ENCODE measurements at regions of chr22 and their contacts with region 1.

Region 1: GRCh38 chr22:33920927-33921524 is 750 bp upstream of the LARGE1 start:
- DNase-seq: peak; percentile 99
- H3K4me3 ChIP-seq: peak overlapping the region; percentile 55 to 89 (median 80)
- H3K27ac ChIP-seq: peak overlapping the region; percentile 87 to 94 (median 90)
- H3K4me1 ChIP-seq: peaks cover 0 to 45% (median 20%) of the 10 kb centered on the region in 4 donors
- H3K27me3 ChIP-seq: peaks cover 12% of the 10 kb centered on the region
- CTCF ChIP-seq: no peak
- EP300 ChIP-seq: no peak
- POLR2A ChIP-seq: peak; percentile 25

Region 2: DNA sequence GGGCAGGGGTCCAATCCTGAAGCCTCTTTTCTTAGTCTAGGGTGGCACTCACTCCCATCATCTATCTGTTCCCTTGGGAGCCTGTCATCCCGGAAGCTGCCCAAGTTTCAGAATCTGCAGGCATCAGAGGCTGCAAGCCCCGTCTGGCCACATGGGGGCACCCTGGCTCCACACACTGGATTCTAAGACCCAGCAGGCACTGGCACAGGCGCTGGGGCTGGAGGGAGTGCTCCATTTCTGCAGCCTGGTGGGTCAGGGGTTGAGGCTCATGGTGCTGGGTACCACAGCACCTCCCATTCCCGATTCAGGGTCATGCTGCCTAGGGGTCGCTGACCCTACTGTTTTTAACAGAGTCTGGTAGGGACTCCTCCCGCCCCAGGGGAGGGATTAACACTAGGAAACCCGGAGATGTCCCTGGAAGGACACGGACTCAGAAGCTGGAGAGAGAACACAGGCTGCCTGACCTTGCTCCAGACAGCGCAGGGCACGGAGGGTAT is 618.9 kb before region 1 on chr22:
- in situ Hi-C with region 1: loop called in 1 of 4 experiments (anchors 25 kb)
- intact Hi-C with region 1: no loop called
- DNase-seq: peak; percentile 85
- H3K4me3 ChIP-seq: no peak overlapping the region
- H3K27ac ChIP-seq: no peak overlapping the region
- H3K4me1 ChIP-seq: no peaks in the 10 kb centered on the region
- H3K27me3 ChIP-seq: no peaks in the 10 kb centered on the region
- CTCF ChIP-seq: peak; percentile 90 to 93 (median 91)
- EP300 ChIP-seq: no peak
- POLR2A ChIP-seq: no peak

Region 3: DNA sequence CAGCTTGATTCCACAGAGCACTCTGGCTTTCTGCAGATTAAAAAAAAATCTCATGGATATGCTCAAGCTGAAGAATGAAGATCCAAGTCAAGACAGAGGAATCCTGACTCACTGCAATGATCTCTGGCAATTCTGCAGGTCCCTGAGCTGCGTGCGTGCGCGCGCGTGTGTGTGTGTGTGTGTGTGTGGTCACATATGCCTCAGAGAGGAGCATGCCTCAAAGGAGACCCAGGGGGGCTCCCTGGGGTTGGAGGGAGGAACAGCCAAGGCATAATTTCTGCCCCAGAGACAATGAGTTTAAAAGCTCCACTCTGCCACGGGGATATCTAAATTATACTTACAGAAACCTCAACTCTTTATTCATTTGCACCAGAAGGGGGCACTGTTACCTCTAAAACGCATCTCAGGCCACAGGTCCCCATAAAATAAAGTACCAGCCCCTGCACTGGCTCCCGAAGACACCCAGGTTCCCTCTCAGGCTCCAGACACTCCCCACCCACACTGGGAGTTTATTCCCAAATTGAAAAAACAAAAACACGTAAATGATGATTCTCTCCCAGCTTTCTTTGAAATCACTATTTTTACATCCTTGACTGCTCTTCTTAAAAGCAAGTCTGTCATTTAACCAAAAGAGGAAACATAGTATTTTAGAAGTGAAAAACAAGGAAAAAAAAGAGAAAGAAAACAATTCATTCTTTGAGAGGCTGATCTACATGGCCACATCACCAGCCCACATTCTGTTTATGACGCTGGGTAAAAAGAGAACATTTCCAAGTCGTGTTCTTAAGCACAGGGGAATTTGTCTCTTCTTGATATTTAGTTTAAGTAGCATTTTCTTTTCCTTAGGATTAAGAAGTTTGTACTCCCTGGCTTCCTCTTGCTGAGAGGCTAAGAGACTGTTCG is 401.7 kb before region 1 on chr22:
- in situ Hi-C with region 1: no loop called
- intact Hi-C with region 1: loop called (anchors 5 kb)
- DNase-seq: peak; percentile 22
- H3K4me3 ChIP-seq: no peak overlapping the region
- H3K27ac ChIP-seq: peak overlapping the region in 1 of 4 donors; percentile 19
- H3K4me1 ChIP-seq: peaks cover 0 to 16% (median 6%) of the 10 kb centered on the region in 4 donors
- H3K27me3 ChIP-seq: no peaks in the 10 kb centered on the region
- CTCF ChIP-seq: peak; percentile 59 to 71 (median 65)
- EP300 ChIP-seq: no peak
- POLR2A ChIP-seq: no peak

Region 4: DNA sequence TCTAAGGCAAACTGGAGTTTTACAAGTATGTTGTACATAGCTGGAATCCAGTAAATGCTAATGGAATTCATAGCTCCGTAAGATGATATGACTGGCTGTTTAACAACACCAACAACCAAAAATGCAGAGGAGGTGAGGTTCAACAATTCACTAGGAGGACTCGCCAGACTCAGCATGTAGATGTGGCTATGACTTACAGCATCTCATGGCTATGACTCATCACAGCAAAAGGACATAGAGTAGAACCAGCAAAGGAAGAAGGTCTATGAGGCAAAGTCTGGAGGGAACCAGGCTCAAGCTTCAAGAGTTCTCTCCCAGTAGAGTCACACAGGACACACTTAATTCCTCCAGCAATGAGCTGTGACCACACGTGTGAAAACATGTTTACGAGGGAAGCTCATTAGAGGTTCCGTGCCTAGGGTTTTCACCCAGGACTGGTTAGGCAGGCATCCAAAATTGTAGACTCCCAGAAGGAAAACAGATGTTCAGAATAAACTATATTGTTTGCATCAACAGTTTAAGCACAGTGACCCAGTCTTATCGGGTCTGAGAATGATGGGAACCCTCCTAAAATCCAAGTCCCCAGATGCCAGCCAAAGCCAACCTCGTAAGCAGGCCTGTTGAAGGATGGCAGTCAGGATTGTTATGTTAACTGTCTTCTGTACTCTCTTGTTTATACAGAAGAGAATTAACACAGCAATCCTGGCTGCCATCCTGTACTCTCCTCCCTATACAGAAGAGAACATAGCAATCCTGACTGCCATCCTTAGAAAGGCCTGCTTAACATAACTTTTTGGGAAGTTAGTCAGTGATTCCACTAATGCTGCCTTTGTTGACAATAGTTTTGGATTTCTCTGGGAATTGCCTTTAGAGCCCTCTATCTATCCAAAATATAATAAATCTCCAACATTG is 117.4 kb before region 1 on chr22:
- in situ Hi-C with region 1: no loop called
- intact Hi-C with region 1: loop called (anchors 5 kb)
- DNase-seq: no peak
- H3K4me3 ChIP-seq: no peak overlapping the region
- H3K27ac ChIP-seq: peak overlapping the region; percentile 62 to 74 (median 68)
- H3K4me1 ChIP-seq: peaks cover 3 to 31% (median 10%) of the 10 kb centered on the region in 4 donors
- H3K27me3 ChIP-seq: no peaks in the 10 kb centered on the region
- CTCF ChIP-seq: no peak
- EP300 ChIP-seq: no peak
- POLR2A ChIP-seq: no peak

Region 5: GRCh38 chr22:33867115-33867866 is 53.7 kb before region 1 on chr22:
- in situ Hi-C with region 1: no loop called
- intact Hi-C with region 1: no loop called
- DNase-seq: peak; percentile 67
- H3K4me3 ChIP-seq: no peak overlapping the region
- H3K27ac ChIP-seq: peak overlapping the region; percentile 81 to 86 (median 82)
- H3K4me1 ChIP-seq: peaks cover 20 to 51% (median 29%) of the 10 kb centered on the region in 4 donors
- H3K27me3 ChIP-seq: no peaks in the 10 kb centered on the region
- CTCF ChIP-seq: no peak
- EP300 ChIP-seq: no peak
- POLR2A ChIP-seq: no peak

Region 6: DNA sequence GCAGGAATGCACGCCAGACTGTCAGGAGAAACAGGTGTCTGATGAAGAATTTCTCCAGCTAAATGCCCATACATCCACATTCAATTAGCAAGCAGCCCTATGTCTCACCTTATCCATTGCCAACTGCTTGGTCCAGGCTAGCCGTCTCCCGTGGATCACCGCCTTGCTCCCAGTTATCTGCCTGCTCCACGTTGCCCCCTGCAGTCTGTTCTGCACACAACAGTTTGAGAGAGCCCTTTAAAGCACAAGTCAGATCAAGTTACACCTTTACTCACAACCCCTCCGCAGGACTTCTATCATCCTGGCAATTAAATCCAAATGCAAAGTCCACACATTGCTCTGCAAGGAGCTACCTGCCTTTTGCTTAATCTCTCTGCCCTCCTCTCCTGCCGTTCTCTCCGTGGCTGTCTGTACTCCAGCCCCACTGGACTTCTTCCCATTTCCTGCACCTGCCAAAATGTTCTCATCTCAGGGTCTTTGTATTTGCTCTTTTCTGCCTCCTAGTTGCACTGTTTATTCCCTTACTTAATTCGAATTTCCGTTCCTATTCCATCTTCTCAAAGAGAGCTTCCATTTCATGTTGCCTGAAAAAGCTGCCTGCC is 184.5 kb after region 1 on chr22:
- in situ Hi-C with region 1: loop called in 1 of 4 experiments (anchors 5 kb)
- intact Hi-C with region 1: loop called (anchors 2 kb)
- DNase-seq: peak; percentile 57
- H3K4me3 ChIP-seq: no peak overlapping the region
- H3K27ac ChIP-seq: no peak overlapping the region
- H3K4me1 ChIP-seq: no peaks in the 10 kb centered on the region
- H3K27me3 ChIP-seq: peaks cover 11% of the 10 kb centered on the region
- CTCF ChIP-seq: peak; percentile 59 to 69 (median 64)
- EP300 ChIP-seq: no peak
- POLR2A ChIP-seq: no peak